ENCODE measurements at regions of chr6 and their contacts with region 1.

Region 1: DNA sequence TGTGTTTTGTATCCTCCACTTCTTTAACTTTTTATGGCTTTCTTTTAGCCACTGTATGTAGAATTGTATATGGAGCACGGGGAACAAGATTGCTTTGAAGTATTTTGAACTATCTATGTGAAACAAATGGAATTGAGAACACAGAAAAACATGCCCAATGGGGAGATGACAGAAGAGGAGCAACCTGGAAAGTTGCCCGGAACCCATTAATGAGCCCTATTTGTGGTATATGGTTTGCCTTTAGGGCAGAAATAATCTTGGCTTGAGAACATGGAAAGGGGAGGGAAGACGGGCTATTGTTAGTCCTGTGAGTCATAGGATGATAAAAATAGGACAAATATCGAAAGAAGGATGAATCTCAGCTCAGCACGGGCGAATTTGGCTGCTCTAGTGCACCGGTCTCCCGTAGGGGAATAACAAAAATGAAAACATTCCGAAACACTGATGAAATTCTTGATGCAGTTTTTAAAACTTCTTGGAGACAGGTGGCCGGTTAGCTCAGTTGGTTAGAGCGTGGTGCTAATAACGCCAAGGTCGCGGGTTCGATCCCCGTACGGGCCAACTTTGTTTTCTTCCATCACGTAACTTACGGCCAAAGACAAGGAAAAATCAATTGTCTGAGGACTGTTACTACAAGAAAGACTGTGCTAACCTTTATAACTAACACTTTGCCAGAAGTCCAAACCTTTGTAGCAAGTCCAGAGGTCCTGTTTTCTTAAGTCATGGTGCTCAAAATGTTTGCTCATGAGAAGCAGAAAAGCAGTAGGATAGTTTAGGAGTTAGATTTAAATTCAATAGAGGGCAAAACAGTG is 15.7 kb downstream of the HMGN4 start:
- DNase-seq: peak; percentile 62 to 93 (median 72)
- ATAC-seq: peak; percentile 66
- H3K4me3 ChIP-seq: peak overlapping the region; percentile 51
- H3K27ac ChIP-seq: peak overlapping the region; percentile 74
- H3K4me1 ChIP-seq: peaks cover 5 to 20% of the 10 kb centered on the region in 2 experiments; a peak in 4 of 5 replicates
- H3K27me3 ChIP-seq: no peaks in the 10 kb centered on the region
- CTCF ChIP-seq: no peak
- EP300 ChIP-seq: peak; percentile 73; the same call in 1 of the 2 replicates
- POLR2A ChIP-seq: no peak
- RAD21 ChIP-seq: no peak; a peak in 1 of 4 replicates

Region 2: DNA sequence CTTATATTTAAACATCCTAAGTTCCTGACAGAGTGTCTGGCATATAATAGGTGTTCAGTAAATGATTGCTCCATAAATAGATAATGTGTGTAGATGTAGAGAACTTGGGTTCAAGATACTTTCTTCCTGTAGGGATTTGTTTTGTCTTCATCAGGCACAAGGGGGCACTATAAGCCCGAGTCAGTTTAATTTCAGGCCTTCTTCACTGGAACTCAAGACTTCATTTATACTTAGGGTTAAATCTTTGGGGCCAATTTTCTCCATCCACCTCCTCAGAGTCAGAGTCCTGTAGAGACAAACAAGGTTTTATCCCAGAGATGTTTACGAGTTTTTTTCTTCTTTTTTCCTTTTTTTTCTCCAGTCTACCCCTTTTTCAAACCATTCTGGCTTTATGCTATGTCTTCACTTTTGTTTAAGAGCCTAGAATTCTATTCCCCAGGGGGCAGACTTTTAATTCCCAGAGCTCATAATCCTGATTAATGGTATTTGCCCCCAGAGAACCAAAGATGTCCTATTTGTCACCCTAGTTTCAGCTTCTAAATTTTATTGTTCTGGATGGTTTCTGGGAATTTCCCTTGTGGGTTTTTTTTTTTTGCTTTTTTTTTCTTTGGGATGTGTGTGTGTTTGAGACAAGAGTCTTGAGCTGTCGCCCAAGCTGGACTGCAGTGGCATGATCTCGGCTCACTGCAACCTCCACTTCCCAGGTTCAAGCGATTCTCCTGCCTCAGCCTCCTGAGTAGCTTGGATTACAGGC is 378.2 kb before region 1 on chr6:
- CTCF ChIA-PET with region 1: no interaction called
- POLR2A ChIA-PET with region 1: no interaction called
- in situ Hi-C with region 1: loop called (anchors 25 kb)
- intact Hi-C with region 1: loop called (anchors 5 kb)
- DNase-seq: peak; percentile 60 to 88 (median 71)
- ATAC-seq: peak; percentile 41
- H3K4me3 ChIP-seq: no peak overlapping the region
- H3K27ac ChIP-seq: no peak overlapping the region
- H3K4me1 ChIP-seq: peaks cover 14% of the 10 kb centered on the region in 2 experiments
- H3K27me3 ChIP-seq: no peaks in the 10 kb centered on the region
- CTCF ChIP-seq: peak; percentile 59 to 87 (median 77)
- EP300 ChIP-seq: no peak; the same call in 1 of the 2 replicates
- POLR2A ChIP-seq: no peak
- RAD21 ChIP-seq: peak; percentile 87 to 88

Region 3: GRCh38 chr6:26520853-26521599 is 32.8 kb before region 1 on chr6:
- CTCF ChIA-PET with region 1: no interaction called
- POLR2A ChIA-PET with region 1: interaction called, 4 read pairs
- in situ Hi-C with region 1: no loop called
- intact Hi-C with region 1: loop called (anchors 1 kb)
- DNase-seq: peak; percentile 94 to 98 (median 98)
- ATAC-seq: peak; percentile 78
- H3K4me3 ChIP-seq: peak overlapping the region; percentile 70
- H3K27ac ChIP-seq: peak overlapping the region; percentile 98
- H3K4me1 ChIP-seq: peaks cover 13 to 28% of the 10 kb centered on the region in 2 experiments; a peak in 4 of 5 replicates
- H3K27me3 ChIP-seq: no peaks in the 10 kb centered on the region
- CTCF ChIP-seq: peak in 1 of 3 experiments; percentile 8; a peak in 2 of 6 replicates
- EP300 ChIP-seq: peak; percentile 68
- POLR2A ChIP-seq: no peak
- RAD21 ChIP-seq: no peak

Region 4: GRCh38 chr6:26537846-26538571 is 15.8 kb before region 1 on chr6 and contains the start of gene HMGN4:
- CTCF ChIA-PET with region 1: no interaction called
- POLR2A ChIA-PET with region 1: interaction called, 26 read pairs
- in situ Hi-C with region 1: no loop called
- intact Hi-C with region 1: loop called (anchors 1 kb)
- DNase-seq: peak; percentile 90 to 95 (median 91)
- ATAC-seq: peak; percentile 91
- H3K4me3 ChIP-seq: peak within 1 kb of the TSS; percentile 67
- H3K27ac ChIP-seq: peak within 1 kb of the TSS; percentile 86
- H3K4me1 ChIP-seq: peaks cover 14 to 22% of the 10 kb centered on the region in 2 experiments
- H3K27me3 ChIP-seq: no peaks in the 10 kb centered on the region
- CTCF ChIP-seq: peak in 2 of 3 experiments; percentile 25; a peak in 1 of 6 replicates
- EP300 ChIP-seq: peak; percentile 72
- POLR2A ChIP-seq: peak; percentile 88
- RAD21 ChIP-seq: peak in 1 of 2 experiments; percentile 48; a peak in 3 of 4 replicates
- polyA plus RNA-seq, gene HMGN4: 35.4 to 41.1 TPM

Region 5: DNA sequence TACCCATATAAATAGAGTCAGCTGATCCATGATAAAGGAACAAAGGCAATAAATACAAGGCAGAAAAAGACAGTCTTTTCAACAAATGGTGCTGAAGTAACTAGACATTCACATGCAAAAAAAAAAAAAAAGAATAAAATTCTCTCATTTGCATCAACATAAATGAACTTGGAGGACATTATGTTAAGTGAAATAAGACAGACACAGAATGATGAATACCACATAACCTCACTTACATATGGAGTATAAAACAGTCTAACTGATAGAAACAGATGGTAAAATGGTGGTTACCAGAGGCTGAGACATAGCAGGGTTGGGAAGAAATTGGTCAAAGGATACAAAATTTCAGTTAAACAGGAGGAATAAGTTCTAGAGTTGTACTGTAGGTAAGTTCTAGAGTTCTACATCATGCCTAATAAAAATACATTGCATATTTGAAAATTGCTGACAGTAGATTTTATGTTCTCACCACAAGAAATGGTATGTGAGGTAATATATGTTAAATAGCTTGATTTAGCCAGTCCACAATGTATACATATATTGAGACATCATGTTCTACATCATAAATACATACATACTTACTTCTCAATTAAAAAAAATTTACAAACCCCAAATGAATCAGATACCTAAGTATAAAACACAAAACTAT is 97.4 kb after region 1 on chr6:
- CTCF ChIA-PET with region 1: no interaction called
- POLR2A ChIA-PET with region 1: no interaction called
- in situ Hi-C with region 1: no loop called
- intact Hi-C with region 1: no loop called
- DNase-seq: no peak
- ATAC-seq: no peak
- H3K4me3 ChIP-seq: no peak overlapping the region
- H3K27ac ChIP-seq: no peak overlapping the region
- H3K4me1 ChIP-seq: no peaks in the 10 kb centered on the region
- H3K27me3 ChIP-seq: no peaks in the 10 kb centered on the region
- CTCF ChIP-seq: no peak
- EP300 ChIP-seq: no peak
- POLR2A ChIP-seq: no peak
- RAD21 ChIP-seq: no peak

Region 6: GRCh38 chr6:27472617-27473400 is 919.0 kb after region 1 on chr6 and contains the start of gene ZNF184:
- CTCF ChIA-PET with region 1: no interaction called
- POLR2A ChIA-PET with region 1: no interaction called
- in situ Hi-C with region 1: no loop called
- intact Hi-C with region 1: loop called (anchors 10 kb)
- DNase-seq: peak; percentile 97 to 100 (median 98)
- ATAC-seq: peak; percentile 91
- H3K4me3 ChIP-seq: peak within 1 kb of the TSS; percentile 75
- H3K27ac ChIP-seq: peak within 1 kb of the TSS; percentile 91
- H3K4me1 ChIP-seq: peaks cover 8 to 11% of the 10 kb centered on the region in 2 experiments; a peak in 4 of 5 replicates
- H3K27me3 ChIP-seq: no peaks in the 10 kb centered on the region
- CTCF ChIP-seq: peak; percentile 31 to 42 (median 37); a peak in 5 of 6 replicates
- EP300 ChIP-seq: peak; percentile 92
- POLR2A ChIP-seq: peak; percentile 92
- RAD21 ChIP-seq: peak; percentile 10 to 18; a peak in 2 of 4 replicates
- polyA plus RNA-seq, gene ZNF184: 7.6 to 12.8 TPM

Region 7: DNA sequence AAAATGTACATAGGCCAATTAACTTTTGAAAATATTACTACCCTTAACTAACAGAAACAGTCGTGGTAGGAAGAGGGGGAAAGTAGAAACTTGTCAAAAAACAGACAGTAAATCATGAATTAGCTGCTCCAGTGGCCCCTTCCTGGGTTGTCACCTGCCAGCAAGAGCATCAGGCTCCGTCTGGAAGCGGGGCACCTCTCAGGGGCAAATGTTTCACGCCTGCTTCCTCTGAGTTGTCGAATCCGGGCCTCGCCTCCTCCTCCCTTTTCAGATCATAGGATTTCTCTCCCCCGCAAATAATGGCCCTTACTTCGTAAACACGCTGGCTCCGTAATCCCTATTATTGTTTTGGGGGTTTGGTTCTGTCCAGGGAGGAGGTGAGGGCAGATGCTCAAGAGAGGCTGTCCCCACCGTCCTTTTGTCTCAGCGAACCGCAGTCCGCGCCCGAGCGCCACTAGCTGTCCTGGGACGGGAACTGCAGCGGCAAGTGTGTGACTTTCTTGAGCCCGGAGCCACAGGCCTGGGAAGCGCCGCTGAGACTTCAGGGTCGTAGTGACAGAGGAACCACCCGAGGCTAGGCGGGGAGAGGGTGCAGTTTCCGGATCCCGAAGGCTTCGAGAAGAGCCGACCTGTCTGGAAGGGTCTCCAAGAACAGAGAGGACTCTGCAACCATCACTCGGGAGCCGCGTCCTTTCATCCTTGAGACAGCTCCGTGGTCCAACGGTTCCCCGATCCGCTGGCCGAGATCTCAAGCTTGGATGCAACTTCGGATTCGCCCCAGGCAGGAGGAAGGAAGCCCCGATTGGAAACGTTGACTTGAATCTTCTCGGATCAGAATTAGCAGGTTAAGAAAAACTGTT is 1133.5 kb after region 1 on chr6:
- CTCF ChIA-PET with region 1: no interaction called
- POLR2A ChIA-PET with region 1: no interaction called
- in situ Hi-C with region 1: no loop called
- intact Hi-C with region 1: loop called (anchors 10 kb)
- DNase-seq: peak; percentile 78 to 97 (median 82)
- ATAC-seq: peak; percentile 89
- H3K4me3 ChIP-seq: peak overlapping the region; percentile 63
- H3K27ac ChIP-seq: peak overlapping the region; percentile 78
- H3K4me1 ChIP-seq: peaks cover 5 to 24% of the 10 kb centered on the region in 2 experiments; a peak in 4 of 5 replicates
- H3K27me3 ChIP-seq: no peaks in the 10 kb centered on the region
- CTCF ChIP-seq: peak; percentile 92 to 96 (median 95)
- EP300 ChIP-seq: 0 out of 2 replicates have a peak, but pooled peaks have one; percentile 14
- POLR2A ChIP-seq: no peak
- RAD21 ChIP-seq: peak; percentile 71 to 87

Measured in K562 (cell line).